OCI-LY7 (cell line): ENCODE measurements at regions of chr19 and their contacts with region 1.

Region 1: GRCh38 chr19:11798391-11799330 is at the start of gene ZNF491:
- DNase-seq: peak; percentile 94
- H3K4me3 ChIP-seq: peak within 1 kb of the TSS; percentile 75
- H3K27ac ChIP-seq: peak within 1 kb of the TSS; percentile 34
- H3K4me1 ChIP-seq: peaks cover 32% of the 10 kb centered on the region
- CTCF ChIP-seq: peak; percentile 61
- total RNA-seq, gene ZNF491: 1.2 and 2.0 TPM in 2 replicates

Region 2: GRCh38 chr19:11624069-11624463 is 174.6 kb before region 1 on chr19:
- CTCF ChIA-PET with region 1: no interaction called
- POLR2A ChIA-PET with region 1: no interaction called
- intact Hi-C with region 1: no loop called
- DNase-seq: no peak
- H3K4me3 ChIP-seq: no peak overlapping the region
- H3K27ac ChIP-seq: no peak overlapping the region
- H3K4me1 ChIP-seq: peaks cover 8% of the 10 kb centered on the region
- CTCF ChIP-seq: no peak

Region 3: DNA sequence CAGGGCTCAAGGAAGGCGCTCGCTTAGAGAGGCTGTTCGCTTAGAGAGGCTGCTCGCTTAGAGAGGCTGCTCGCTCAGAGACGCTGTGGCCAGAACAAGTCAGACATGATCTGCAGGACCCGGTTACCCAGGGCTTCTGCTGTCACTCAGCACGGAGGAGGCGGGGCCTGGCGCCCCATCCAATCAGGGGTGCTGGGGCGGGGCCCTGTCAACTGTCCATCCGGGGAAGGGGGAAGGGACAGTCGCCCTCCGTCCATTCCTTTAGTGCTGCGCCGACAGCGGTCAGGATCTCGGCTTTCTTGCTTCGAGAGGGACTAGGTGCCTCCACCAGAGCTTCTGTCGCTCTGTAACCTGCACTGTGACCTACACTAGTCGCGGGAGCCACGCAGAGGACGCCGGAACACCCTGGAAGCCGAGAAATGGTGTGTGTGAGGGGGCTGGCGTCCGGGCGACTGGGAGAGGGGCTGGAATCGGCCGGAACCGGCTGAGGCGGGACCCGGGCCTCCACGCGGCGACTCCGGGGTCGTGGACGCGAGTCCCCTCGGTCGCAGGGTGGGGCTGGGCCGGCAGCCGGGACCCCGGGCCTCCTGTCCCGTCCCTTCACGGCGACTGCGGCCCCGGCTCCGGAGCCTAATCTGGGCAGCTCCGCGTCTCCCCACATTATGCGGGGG is 15.5 kb after region 1 on chr19 and contains the start of gene ZNF440:
- CTCF ChIA-PET with region 1: interaction called, 4 read pairs
- POLR2A ChIA-PET with region 1: interaction called, 3 read pairs
- intact Hi-C with region 1: loop called (anchors 1 kb)
- DNase-seq: peak; percentile 92
- H3K4me3 ChIP-seq: peak within 1 kb of the TSS; percentile 77
- H3K27ac ChIP-seq: no peak within 1 kb of the TSS
- H3K4me1 ChIP-seq: peaks cover 11% of the 10 kb centered on the region
- CTCF ChIP-seq: no peak
- total RNA-seq, gene ZNF440: 7.5 and 7.9 TPM in 2 replicates

Region 4: GRCh38 chr19:11881151-11881800 is 82.6 kb after region 1 on chr19:
- CTCF ChIA-PET with region 1: interaction called, 3 read pairs
- POLR2A ChIA-PET with region 1: interaction called, 3 read pairs
- intact Hi-C with region 1: loop called (anchors 1 kb)
- DNase-seq: peak; percentile 72
- H3K4me3 ChIP-seq: no peak overlapping the region
- H3K27ac ChIP-seq: no peak overlapping the region
- H3K4me1 ChIP-seq: no peaks in the 10 kb centered on the region
- CTCF ChIP-seq: peak; percentile 83

Region 5: GRCh38 chr19:12052497-12053169 is 254.0 kb after region 1 on chr19 and contains the start of gene ZNF878:
- CTCF ChIA-PET with region 1: no interaction called
- POLR2A ChIA-PET with region 1: no interaction called
- intact Hi-C with region 1: loop called (anchors 5 kb)
- DNase-seq: peak; percentile 82
- H3K4me3 ChIP-seq: peak within 1 kb of the TSS; percentile 81
- H3K27ac ChIP-seq: no peak within 1 kb of the TSS
- H3K4me1 ChIP-seq: peaks cover 9% of the 10 kb centered on the region
- CTCF ChIP-seq: peak; percentile 59
- total RNA-seq, gene ZNF878: 0.72 and 1.0 TPM in 2 replicates